ENCODE measurements at regions of chr10 and their contacts with region 1.

Region 1: DNA sequence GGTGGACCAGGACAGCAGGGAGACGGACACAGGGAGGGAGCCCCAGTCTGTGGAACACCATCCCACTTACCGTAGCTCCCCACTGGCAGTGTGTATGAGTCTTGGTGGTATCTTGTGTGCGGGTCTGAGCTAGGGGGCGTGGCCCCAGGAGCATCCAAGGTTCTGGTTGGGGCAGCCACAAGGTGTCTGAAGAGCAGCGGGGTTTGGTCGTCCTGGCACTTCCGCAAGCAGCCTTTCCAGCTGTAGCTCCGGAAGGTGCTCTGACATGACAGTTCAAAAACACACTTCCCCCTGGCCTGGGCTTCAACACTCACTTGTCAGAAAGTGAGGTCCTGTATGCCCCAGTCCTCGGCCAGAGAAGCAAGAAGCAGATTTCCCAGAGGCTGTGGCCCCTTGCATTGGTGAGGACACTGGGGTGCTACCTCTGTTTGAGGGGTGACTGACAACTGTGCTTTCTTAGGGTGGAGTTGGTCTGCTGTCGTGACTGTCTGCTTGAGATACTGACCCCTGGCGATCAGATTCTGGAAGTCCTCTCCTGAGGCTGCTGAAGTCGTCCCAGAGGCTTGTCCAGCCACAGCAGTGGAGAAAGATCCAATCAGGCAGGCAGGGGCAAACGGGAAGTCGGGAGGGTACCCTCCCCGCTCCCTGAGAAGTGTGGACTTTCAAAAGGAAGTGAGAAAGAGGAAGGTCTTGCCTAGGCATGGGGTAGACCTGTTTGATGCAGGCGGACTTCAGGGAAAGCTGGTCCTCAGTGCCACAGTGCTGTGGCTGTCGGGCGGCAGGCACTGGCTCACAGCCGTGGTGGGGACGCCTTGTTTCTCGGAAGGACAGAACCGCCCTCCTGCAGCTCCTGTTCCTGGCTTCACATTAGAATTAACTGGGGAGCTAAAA is 51.4 kb upstream of the PFKFB3 start:
- DNase-seq: peak; percentile 70
- ATAC-seq: peak; percentile 78
- H3K4me3 Mint-ChIP-seq: peak overlapping the region; percentile 15
- H3K27ac Mint-ChIP-seq: peak overlapping the region; percentile 63
- H3K4me1 Mint-ChIP-seq: peaks cover 51% of the 10 kb centered on the region
- H3K27me3 Mint-ChIP-seq: no peaks in the 10 kb centered on the region
- CTCF ChIP-seq: peak; percentile 64

Region 2: GRCh38 chr10:6108603-6109443 is 42.5 kb before region 1 on chr10:
- CTCF ChIA-PET with region 1: interaction called, 30 read pairs
- POLR2A ChIA-PET with region 1: interaction called, 7 read pairs
- intact Hi-C with region 1: no loop called
- DNase-seq: peak; percentile 32
- ATAC-seq: peak; percentile 76
- H3K4me3 Mint-ChIP-seq: no peak overlapping the region
- H3K27ac Mint-ChIP-seq: peak overlapping the region; percentile 86
- H3K4me1 Mint-ChIP-seq: peaks cover 36% of the 10 kb centered on the region
- H3K27me3 Mint-ChIP-seq: no peaks in the 10 kb centered on the region
- CTCF ChIP-seq: peak; percentile 93

Region 3: GRCh38 chr10:6128591-6129251 is 22.6 kb before region 1 on chr10:
- CTCF ChIA-PET with region 1: interaction called, 14 read pairs
- POLR2A ChIA-PET with region 1: interaction called, 5 read pairs
- intact Hi-C with region 1: no loop called
- DNase-seq: no peak
- ATAC-seq: no peak
- H3K4me3 Mint-ChIP-seq: no peak overlapping the region
- H3K27ac Mint-ChIP-seq: no peak overlapping the region
- H3K4me1 Mint-ChIP-seq: peaks cover 35% of the 10 kb centered on the region
- H3K27me3 Mint-ChIP-seq: peaks cover 3% of the 10 kb centered on the region
- CTCF ChIP-seq: no peak

Region 4: DNA sequence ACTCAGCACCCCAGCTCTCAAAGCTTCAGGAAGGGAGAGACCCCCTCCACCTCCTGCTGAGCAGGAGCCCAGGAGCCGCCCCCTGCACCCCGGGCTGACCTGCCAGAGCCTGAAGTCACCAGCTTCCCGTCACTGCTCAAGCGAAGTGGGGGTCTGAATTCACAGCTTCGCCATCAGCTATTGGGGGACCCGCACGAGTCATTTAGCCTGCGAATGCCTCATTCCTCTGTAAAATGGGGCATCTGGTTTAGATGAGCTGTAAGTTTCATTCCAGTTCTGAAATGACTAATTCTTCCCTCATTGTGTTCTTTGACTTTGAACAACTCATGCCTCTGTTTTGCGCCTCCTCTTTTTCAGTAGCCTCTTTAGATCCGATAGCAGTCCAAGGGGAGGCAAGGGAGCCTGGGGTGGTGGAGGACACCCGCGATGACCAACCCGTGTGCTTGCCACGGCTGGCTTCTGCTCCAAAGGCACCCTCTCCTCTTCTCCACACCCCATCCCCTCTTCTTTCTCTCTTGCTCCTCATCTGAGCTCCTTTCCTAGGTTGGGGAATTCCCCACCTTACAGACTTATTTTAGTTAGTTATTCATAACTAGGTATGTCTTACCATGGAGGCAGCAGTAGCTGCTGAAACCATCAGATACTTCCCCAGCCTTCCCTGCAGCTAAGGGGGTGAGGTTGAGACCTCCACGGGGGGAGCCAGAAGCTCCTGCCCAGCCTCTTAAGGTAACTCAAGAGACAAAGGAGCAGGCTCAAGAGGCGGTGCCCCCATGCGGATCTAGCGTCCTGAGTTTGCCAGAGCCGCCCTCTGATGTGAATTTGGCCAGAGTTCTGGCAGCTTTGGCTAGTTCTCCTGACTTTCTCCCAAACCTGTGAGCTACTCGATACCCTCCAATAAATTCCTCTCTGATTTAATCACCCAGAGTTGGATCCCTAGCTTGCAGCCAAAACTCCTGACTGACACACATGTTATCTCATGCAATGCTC is 14.8 kb before region 1 on chr10:
- CTCF ChIA-PET with region 1: interaction called, 23 read pairs
- POLR2A ChIA-PET with region 1: interaction called, 17 read pairs
- intact Hi-C with region 1: no loop called
- DNase-seq: peak; percentile 84
- ATAC-seq: peak; percentile 80
- H3K4me3 Mint-ChIP-seq: peak overlapping the region; percentile 58
- H3K27ac Mint-ChIP-seq: peak overlapping the region; percentile 89
- H3K4me1 Mint-ChIP-seq: peaks cover 53% of the 10 kb centered on the region
- H3K27me3 Mint-ChIP-seq: peaks cover 9% of the 10 kb centered on the region
- CTCF ChIP-seq: no peak

Region 5: GRCh38 chr10:6163364-6164270 is 12.3 kb after region 1 on chr10:
- CTCF ChIA-PET with region 1: interaction called, 33 read pairs
- POLR2A ChIA-PET with region 1: interaction called, 8 read pairs
- intact Hi-C with region 1: no loop called
- DNase-seq: peak; percentile 90
- ATAC-seq: peak; percentile 97
- H3K4me3 Mint-ChIP-seq: peak overlapping the region; percentile 93
- H3K27ac Mint-ChIP-seq: peak overlapping the region; percentile 93
- H3K4me1 Mint-ChIP-seq: peaks cover 57% of the 10 kb centered on the region
- H3K27me3 Mint-ChIP-seq: no peaks in the 10 kb centered on the region
- CTCF ChIP-seq: no peak